Astrocyte of the cerebellum (primary cell): ENCODE measurements at regions of chr11 and their contacts with region 1.

Region 1: DNA sequence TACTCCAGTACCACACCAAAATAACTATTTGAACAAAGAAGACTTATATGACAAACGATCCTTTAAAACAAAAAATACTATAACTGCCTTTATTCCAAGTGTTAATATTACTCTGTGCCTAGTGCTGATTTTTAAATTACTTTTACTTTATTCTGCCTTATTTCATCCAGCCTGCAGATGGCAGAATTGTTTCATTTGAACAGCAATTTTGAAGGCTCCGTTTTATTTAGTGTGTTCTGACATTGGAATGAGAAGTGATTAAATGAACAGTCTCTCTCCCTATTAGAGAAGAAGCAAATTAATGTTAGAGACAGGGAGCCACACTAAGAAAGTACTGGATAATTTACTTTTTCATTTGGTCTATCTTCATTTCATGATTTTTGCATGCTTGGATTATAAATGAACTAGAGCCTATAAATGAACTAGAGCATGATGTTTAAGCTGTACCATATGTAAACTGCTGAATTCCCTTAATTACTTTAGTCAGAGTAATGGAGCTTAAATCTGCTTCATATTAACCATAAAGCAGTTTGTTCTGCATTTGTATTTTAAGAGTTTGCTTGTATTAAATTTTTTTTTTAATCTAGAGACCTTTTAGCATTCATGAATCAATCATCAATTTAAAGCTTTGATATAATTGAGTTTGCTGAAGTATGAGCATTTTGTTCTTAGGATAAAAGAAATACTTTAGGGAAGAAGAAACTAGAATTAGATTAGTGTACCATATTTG is 9.8 kb downstream of the PDHX start:
- DNase-seq: peak; percentile 53
- H3K4me3 ChIP-seq: no peak overlapping the region
- CTCF ChIP-seq: peak; percentile 55

Region 2: GRCh38 chr11:34840736-34841386 is 85.4 kb before region 1 on chr11:
- in situ Hi-C with region 1: no loop called
- DNase-seq: no peak
- H3K4me3 ChIP-seq: no peak overlapping the region
- CTCF ChIP-seq: peak; percentile 39

Region 3: DNA sequence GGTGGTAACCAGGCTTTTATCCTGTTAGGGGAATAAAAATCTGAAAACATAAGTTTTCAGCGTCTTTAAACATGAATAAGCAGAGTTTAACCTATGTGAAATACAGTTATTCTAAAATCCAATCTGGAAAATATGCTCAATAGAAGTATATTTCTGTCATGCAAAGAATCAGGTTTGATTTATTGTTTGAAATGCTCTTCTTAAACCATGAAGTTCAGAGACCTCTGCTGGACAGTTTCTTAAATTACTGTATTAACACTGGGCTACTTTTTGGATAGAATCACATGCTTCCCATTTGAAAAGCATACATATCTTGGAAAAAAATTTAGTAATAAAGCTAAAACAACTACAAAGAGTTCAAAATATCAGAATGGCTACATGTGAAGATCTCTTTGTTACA is 35.5 kb before region 1 on chr11:
- in situ Hi-C with region 1: no loop called
- DNase-seq: peak; percentile 47
- H3K4me3 ChIP-seq: no peak overlapping the region
- CTCF ChIP-seq: peak; percentile 24

Region 4: GRCh38 chr11:34988294-34989255 is 62.3 kb after region 1 on chr11:
- in situ Hi-C with region 1: loop called (anchors 5 kb)
- DNase-seq: peak; percentile 75
- H3K4me3 ChIP-seq: no peak overlapping the region
- CTCF ChIP-seq: no peak

Region 5: DNA sequence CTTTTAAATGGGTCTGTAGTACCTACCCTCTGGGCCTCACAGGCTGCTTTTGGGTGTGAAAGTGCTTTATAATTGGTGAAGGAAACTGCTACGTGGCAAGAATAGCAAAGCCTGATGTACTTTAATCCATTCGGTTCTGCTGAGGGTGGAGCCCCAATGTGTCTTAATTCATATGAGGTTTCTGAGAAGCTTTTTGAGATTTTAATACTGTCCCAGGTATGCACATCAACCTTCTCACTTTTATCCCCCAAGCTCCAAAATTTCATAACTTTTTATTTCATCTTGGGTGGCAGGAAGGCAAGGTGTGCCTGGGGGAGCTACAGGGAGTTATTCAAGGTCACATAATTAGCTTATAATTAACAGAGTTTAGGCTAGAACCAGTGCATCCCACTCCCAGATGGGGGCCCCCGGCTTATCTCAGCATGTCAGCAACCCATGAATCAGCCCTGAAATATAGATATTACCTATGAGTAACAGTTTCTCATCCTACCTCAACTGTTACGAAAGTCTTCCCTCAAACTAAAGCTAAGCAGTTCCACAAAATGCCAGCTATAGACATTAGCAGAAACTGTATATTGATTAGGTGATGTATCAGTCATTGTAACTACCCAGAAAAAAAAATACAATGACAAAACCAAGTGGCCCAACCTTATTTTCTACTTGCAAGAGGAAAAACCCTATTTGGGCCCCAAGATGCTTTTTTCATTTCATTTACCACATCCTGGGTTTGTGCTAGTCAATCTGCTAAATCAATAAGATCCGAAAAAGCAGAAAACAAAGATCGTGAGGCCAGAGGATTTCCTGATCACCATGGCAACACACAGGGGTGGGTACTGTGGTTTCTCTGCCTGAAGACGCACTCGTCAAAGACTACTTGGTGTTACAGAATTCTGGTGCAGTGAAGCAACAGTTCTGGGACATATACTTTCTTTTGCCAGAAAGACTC is 239.4 kb after region 1 on chr11:
- in situ Hi-C with region 1: loop called (anchors 5 kb)
- DNase-seq: peak; percentile 58
- H3K4me3 ChIP-seq: no peak overlapping the region
- CTCF ChIP-seq: no peak

Region 6: GRCh38 chr11:35376613-35377012 is 450.3 kb after region 1 on chr11:
- in situ Hi-C with region 1: loop called (anchors 5 kb)
- DNase-seq: no peak
- H3K4me3 ChIP-seq: no peak overlapping the region
- CTCF ChIP-seq: no peak

Region 7: DNA sequence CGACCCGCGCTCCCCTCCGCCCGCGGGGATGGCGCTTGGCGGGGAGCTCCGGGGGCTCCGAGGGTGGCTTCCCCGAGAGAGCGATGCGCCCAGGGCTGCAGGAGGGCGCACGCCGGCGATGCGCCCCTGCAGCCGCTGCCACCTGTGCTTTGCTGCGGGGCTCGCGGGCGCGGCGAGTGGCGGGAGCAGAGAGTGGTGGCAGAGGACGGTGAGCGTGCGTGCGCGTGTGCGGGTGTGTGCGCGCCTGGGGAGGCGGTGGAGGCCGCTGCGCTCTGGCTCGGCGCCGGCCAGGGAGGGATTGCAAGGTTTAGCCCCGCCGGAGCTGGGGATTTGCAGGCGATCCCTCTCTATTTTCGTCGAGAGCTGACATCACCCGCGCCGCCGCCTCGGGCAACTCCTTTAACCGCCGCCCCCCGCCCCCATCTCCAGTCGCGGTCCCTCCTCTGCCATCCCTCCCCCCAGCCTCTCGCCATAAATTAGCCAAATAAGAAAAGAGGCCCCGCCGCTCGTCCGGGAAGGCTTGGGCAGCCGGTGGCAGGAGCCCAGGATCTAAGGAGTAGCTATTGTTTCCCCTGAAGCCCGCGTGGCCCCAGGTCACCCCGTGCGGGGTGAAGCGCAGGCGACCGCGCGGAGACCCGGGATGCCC is 493.0 kb after region 1 on chr11 and contains the start of gene SLC1A2:
- in situ Hi-C with region 1: loop called (anchors 5 kb)
- DNase-seq: no peak
- H3K4me3 ChIP-seq: peak within 1 kb of the TSS; percentile 37
- CTCF ChIP-seq: no peak